ENCODE measurements at regions of chr6 and their contacts with region 1.

Region 1: GRCh38 chr6:116954938-116955337 is 77.9 kb downstream of the RFX6 start:
- DNase-seq: peak in 1 of 2 experiments; percentile 41
- H3K4me3 ChIP-seq: no peak overlapping the region
- H3K4me3 Mint-ChIP-seq: peak overlapping the region; percentile 54
- H3K27ac Mint-ChIP-seq: peak overlapping the region; percentile 38
- H3K4me1 ChIP-seq: peaks cover 33% of the 10 kb centered on the region
- H3K4me1 Mint-ChIP-seq: peaks cover 27% of the 10 kb centered on the region
- H3K27me3 ChIP-seq: no peaks in the 10 kb centered on the region
- H3K27me3 Mint-ChIP-seq: no peaks in the 10 kb centered on the region
- CTCF ChIP-seq: no peak

Region 2: DNA sequence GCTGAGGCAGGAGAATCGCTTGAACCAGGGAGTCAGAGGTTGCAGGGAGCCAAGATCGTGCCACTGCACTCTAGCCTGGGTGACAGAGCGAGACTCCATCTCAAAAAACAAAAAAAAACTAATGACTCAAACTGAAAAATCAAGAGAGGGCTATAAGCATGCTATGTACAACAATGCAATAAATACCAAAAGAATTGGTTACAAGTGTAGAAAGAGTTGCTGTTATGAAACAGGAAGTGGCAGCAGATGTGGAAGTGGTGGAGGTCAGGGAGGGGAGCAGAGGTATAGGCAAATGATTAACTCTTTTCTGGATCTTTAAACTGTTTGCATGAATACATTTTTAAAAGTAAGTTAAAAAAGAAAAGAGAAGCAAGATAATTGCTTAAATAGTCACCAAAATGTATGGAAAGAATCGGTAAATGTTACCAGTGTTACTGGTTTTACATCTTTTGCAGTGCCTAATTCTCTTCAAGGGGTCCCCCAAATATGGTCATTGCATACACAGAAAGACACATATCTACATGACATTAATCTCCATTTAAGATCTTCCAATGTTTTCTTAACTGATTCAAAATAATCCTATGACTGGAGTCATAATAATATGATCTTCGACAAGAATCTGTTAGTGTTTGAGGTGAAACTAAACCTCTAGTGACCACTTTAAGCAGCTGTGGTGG is 478.8 kb before region 1 on chr6:
- CTCF ChIA-PET with region 1: no interaction called
- POLR2A ChIA-PET with region 1: no interaction called
- intact Hi-C with region 1: no loop called
- DNase-seq: no peak
- H3K4me3 ChIP-seq: no peak overlapping the region
- H3K4me3 Mint-ChIP-seq: no peak overlapping the region
- H3K27ac Mint-ChIP-seq: no peak overlapping the region
- H3K4me1 ChIP-seq: no peaks in the 10 kb centered on the region
- H3K4me1 Mint-ChIP-seq: peaks cover 7% of the 10 kb centered on the region
- H3K27me3 ChIP-seq: no peaks in the 10 kb centered on the region
- H3K27me3 Mint-ChIP-seq: peaks cover 10% of the 10 kb centered on the region
- CTCF ChIP-seq: no peak

Region 3: DNA sequence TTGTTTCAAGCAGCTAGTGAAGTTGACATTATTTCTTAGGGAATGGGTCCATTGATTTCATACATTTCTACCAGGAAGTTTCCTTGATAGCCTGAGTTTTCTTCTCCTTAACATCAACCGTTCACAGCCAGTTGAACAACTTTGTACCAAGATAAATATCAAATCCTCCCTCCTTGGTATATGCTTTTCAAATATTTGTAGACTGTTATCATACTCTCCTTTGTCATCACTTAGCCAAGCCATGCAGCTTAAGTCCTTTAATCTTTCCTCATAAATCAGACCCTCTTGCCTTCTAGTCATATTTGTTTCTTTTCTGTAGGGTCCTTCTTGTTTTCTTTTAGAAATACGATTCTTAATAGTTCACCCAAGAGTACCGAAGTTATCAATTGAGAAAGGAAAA is 52.3 kb before region 1 on chr6:
- CTCF ChIA-PET with region 1: no interaction called
- POLR2A ChIA-PET with region 1: no interaction called
- intact Hi-C with region 1: no loop called
- DNase-seq: peak in 1 of 2 experiments; percentile 21
- H3K4me3 ChIP-seq: no peak overlapping the region
- H3K4me3 Mint-ChIP-seq: no peak overlapping the region
- H3K27ac Mint-ChIP-seq: no peak overlapping the region
- H3K4me1 ChIP-seq: peaks cover 10% of the 10 kb centered on the region
- H3K4me1 Mint-ChIP-seq: peaks cover 14% of the 10 kb centered on the region
- H3K27me3 ChIP-seq: no peaks in the 10 kb centered on the region
- H3K27me3 Mint-ChIP-seq: no peaks in the 10 kb centered on the region
- CTCF ChIP-seq: no peak

Region 4: GRCh38 chr6:116924286-116924685 is 30.7 kb before region 1 on chr6:
- CTCF ChIA-PET with region 1: no interaction called
- POLR2A ChIA-PET with region 1: no interaction called
- intact Hi-C with region 1: loop called (anchors 1 kb)
- DNase-seq: peak; percentile 48 to 55
- H3K4me3 ChIP-seq: no peak overlapping the region
- H3K4me3 Mint-ChIP-seq: no peak overlapping the region
- H3K27ac Mint-ChIP-seq: no peak overlapping the region
- H3K4me1 ChIP-seq: peaks cover 25% of the 10 kb centered on the region
- H3K4me1 Mint-ChIP-seq: peaks cover 13% of the 10 kb centered on the region
- H3K27me3 ChIP-seq: no peaks in the 10 kb centered on the region
- H3K27me3 Mint-ChIP-seq: no peaks in the 10 kb centered on the region
- CTCF ChIP-seq: no peak

Region 5: GRCh38 chr6:116933485-116933884 is 21.5 kb before region 1 on chr6:
- CTCF ChIA-PET with region 1: no interaction called
- POLR2A ChIA-PET with region 1: no interaction called
- intact Hi-C with region 1: loop called (anchors 1 kb)
- DNase-seq: peak in 1 of 2 experiments; percentile 23
- H3K4me3 ChIP-seq: no peak overlapping the region
- H3K4me3 Mint-ChIP-seq: no peak overlapping the region
- H3K27ac Mint-ChIP-seq: no peak overlapping the region
- H3K4me1 ChIP-seq: peaks cover 12% of the 10 kb centered on the region
- H3K4me1 Mint-ChIP-seq: peaks cover 13% of the 10 kb centered on the region
- H3K27me3 ChIP-seq: no peaks in the 10 kb centered on the region
- H3K27me3 Mint-ChIP-seq: no peaks in the 10 kb centered on the region
- CTCF ChIP-seq: no peak

Measured in Caco-2 (cell line).